ENCODE measurements at regions of chr6 and their contacts with region 1.

Region 1: GRCh38 chr6:10694302-10695085 is at the starts of genes C6orf52 and PAK1IP1:
- DNase-seq: peak; percentile 89 to 96 (median 94)
- H3K4me3 ChIP-seq: peak within 1 kb of the TSS; percentile 59 to 100 (median 88)
- H3K27ac ChIP-seq: peak within 1 kb of the TSS; percentile 80 to 100 (median 98)
- H3K27me3 ChIP-seq: no peaks in the 10 kb centered on the region
- CTCF ChIP-seq: peak in 24 of 56 donors; percentile 2 to 45 (median 18)
- total RNA-seq, gene C6orf52: 0.75 to 5.4 (median 2.2) TPM in 98 of 120 experiments, not detected in the others
- total RNA-seq, gene PAK1IP1: 7.8 to 17.5 (median 11.1) TPM

Region 2: DNA sequence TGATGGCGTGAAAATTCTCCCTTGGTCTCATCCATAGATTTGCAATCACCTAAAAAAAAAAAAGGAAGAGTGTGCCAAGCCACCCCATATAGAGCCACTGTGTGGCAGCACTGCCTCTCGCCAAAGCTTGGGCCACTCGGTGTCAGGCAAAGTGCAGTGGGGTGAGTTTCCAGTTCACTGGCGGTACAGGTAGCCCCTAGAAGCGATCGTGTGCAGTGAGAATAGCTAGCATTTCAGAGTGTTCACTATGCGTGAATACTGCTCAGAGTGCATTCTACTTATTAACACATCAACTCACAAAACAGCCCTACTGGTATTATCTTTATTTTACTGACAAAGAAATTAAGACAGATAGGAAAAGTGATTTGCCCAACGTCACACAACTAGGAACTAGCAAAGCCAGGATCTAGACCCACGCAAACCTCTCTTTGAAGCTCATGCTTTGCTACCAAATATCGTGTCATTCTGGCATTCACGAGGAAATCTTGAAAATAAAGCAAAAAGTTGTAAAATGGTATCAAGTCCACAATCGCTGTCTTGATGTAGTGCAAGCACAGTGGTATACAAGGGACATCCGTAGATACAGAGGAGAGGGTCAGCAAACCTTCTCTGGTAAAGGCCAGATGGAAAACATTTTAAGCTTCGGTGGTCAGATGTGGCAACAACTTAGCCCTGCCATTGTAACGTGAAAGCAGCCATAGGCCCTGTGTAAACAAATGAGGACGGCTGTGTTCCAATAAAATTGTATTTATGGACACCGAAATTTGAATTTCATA is 183.7 kb before region 1 on chr6:
- intact Hi-C with region 1: loop called (anchors 5 to 10 kb)
- DNase-seq: peak in 7 of 10 donors; percentile 33 to 66 (median 46)
- H3K4me3 ChIP-seq: peak overlapping the region in 24 of 59 donors; percentile 1 to 47 (median 21)
- H3K27ac ChIP-seq: no peak overlapping the region
- H3K27me3 ChIP-seq: no peaks in the 10 kb centered on the region
- CTCF ChIP-seq: peak; percentile 28 to 88 (median 70)

Region 3: GRCh38 chr6:10555625-10556309 is 138.7 kb before region 1 on chr6:
- intact Hi-C with region 1: loop called in 1 of 2 experiments (anchors 5 kb)
- DNase-seq: peak; percentile 24 to 84 (median 56)
- H3K4me3 ChIP-seq: peak overlapping the region; percentile 14 to 74 (median 57)
- H3K27ac ChIP-seq: peak overlapping the region in 49 of 59 donors; percentile 1 to 84 (median 54)
- H3K27me3 ChIP-seq: peaks cover 0 to 7% (median 0%) of the 10 kb centered on the region in 45 donors
- CTCF ChIP-seq: peak in 1 of 56 donors; percentile 11

Region 4: DNA sequence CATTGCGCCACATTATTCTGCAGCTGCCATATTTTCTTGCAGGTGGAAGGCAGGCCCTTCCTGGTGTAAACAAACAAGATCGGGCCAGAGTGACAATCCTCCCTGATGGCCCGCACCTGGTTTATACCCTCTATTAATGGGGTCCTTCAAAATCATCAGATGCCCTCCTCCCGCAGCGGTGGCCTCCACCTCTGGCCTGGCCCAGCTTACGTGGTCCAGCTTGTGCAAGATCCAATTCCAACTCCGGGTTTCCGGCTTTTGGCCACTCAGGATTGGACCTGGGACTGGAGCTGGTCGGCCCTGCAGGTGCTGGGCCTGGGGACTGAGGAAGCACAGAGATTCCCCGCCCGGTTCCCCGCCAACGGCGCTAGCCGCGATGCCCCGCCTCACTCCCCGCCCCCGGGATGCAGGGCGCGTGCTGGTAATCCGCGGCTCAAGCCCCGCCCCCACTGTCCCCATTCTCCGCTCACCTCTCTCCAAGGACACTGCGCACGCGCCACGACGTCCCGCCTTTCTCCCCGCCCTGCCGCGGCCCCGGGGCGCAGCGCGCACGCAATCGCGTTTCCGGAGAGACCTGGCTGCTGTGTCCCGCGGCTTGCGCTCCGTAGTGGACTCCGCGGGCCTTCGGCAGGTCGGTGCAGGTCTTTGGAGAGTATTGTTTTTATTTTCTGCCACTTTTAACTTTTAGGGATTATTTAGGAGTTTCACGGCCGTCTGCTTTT is 52.9 kb after region 1 on chr6 and contains the start of gene TMEM14B:
- intact Hi-C with region 1: loop called (anchors 1 kb)
- DNase-seq: peak; percentile 97 to 100 (median 99)
- H3K4me3 ChIP-seq: peak within 1 kb of the TSS; percentile 64 to 98 (median 80)
- H3K27ac ChIP-seq: peak within 1 kb of the TSS; percentile 43 to 96 (median 90)
- H3K27me3 ChIP-seq: no peaks in the 10 kb centered on the region
- CTCF ChIP-seq: peak in 31 of 56 donors; percentile 4 to 62 (median 26)
- total RNA-seq, gene TMEM14B: 49.1 to 90.5 (median 69.1) TPM

Region 5: DNA sequence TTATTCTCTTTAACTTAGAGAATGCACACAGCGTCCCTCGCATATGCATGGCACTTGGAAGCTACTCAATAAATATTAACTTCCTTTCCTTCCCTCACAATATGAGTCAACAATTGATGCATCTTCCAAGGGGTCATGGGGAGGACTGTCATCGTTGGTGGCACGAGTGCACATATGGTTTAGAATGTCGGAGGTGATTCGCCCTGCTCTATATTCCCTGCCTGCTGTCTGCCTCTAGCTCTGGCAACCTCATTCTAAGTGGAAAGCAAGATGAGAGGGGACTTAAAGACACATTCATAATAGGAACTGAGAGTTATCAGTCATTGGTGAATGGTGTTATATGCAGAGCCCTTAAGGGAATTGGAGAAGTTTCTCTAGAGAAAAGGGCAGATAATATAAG is 99.2 kb after region 1 on chr6:
- intact Hi-C with region 1: loop called in 1 of 2 experiments (anchors 10 kb)
- DNase-seq: no peak
- H3K4me3 ChIP-seq: no peak overlapping the region
- H3K27ac ChIP-seq: no peak overlapping the region
- H3K27me3 ChIP-seq: no peaks in the 10 kb centered on the region
- CTCF ChIP-seq: no peak

Region 6: DNA sequence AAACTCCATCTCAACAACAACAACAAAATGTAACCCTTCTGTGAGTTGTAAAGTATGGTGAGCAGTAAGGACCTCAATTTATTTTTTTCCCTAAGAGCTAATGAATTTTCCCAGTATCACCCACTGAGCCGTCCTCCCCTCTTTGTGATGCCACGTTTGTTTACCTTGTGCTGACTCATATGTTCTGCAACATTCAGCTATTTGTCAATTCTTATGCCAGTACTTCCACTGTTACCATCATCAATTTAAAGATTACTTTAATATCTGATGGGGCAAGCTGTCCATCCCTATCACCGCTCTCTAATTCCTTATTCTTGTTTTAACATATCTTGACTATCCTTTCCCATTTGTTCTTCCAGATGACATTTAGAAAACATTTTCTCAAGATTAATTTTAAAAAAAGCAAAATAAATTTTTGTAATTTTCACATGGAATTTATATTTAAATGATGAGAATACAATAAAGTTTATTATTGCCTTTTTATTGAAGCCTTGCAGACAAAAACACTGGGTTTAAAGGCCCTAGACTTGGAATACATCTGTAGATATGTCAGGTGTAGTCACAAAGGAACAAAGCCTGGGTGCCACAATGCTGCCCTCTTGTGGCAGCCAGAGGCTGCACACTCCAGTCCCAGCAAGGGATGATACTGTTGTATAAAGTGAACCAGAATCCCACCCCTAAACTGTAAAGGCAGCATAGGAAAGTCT is 106.5 kb after region 1 on chr6:
- intact Hi-C with region 1: loop called (anchors 10 kb)
- DNase-seq: peak; percentile 33 to 77 (median 52)
- H3K4me3 ChIP-seq: no peak overlapping the region
- H3K27ac ChIP-seq: no peak overlapping the region
- H3K27me3 ChIP-seq: no peaks in the 10 kb centered on the region
- CTCF ChIP-seq: peak; percentile 82 to 99 (median 96)